ENCODE measurements at regions of chr15 and their contacts with region 1.

Region 1: GRCh38 chr15:62389885-62390790 is 225.1 kb upstream of the C2CD4B start:
- DNase-seq: peak; percentile 67
- H3K4me3 Mint-ChIP-seq: peak within 1 kb of the TSS; percentile 90
- H3K27ac Mint-ChIP-seq: peak within 1 kb of the TSS; percentile 88
- H3K4me1 Mint-ChIP-seq: peaks cover 9% of the 10 kb centered on the region
- H3K27me3 Mint-ChIP-seq: peaks cover 3% of the 10 kb centered on the region
- CTCF ChIP-seq: no peak

Region 2: GRCh38 chr15:62068071-62068786 is 321.9 kb before region 1 on chr15:
- CTCF ChIA-PET with region 1: no interaction called
- POLR2A ChIA-PET with region 1: no interaction called
- intact Hi-C with region 1: no loop called
- DNase-seq: peak; percentile 22
- H3K4me3 Mint-ChIP-seq: no peak overlapping the region
- H3K27ac Mint-ChIP-seq: no peak overlapping the region
- H3K4me1 Mint-ChIP-seq: peaks cover 16% of the 10 kb centered on the region
- H3K27me3 Mint-ChIP-seq: peaks cover 10% of the 10 kb centered on the region
- CTCF ChIP-seq: no peak

Region 3: DNA sequence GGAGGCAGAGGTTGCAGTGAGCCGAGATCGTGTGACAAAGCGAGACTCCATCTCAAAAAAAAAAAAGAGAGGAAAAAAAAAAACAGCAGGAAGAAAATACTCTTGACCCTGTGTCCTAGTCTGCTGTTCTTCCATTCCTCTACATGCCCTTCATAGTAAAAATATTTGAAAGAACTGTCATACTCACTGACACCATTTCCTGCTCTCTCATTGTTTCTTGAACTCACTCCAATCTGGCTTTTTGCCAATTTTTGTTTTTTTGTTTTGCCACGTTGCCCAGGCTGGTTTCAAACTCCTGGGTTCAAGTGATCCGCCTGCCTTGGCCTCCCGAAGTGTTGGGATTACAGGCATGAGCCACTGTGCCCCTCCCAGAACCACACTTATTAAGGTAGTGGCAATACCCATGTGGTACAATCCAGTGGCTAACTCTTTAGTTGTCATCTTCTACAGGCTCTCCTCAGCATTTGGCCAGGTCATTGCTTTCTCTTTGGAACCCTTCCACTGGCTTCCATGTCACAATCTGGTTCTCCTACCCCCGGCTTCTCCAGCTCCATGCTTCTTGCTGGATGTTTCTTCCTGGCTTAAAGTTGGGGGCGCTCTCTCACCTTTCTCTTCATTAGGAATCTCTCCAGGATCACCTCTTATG is 13.1 kb after region 1 on chr15:
- CTCF ChIA-PET with region 1: interaction called, 14 read pairs
- POLR2A ChIA-PET with region 1: interaction called, 8 read pairs
- intact Hi-C with region 1: no loop called
- DNase-seq: peak; percentile 66
- H3K4me3 Mint-ChIP-seq: peak overlapping the region; percentile 34
- H3K27ac Mint-ChIP-seq: peak overlapping the region; percentile 69
- H3K4me1 Mint-ChIP-seq: peaks cover 25% of the 10 kb centered on the region
- H3K27me3 Mint-ChIP-seq: no peaks in the 10 kb centered on the region
- CTCF ChIP-seq: no peak

Region 4: GRCh38 chr15:62469874-62470688 is 79.9 kb after region 1 on chr15:
- CTCF ChIA-PET with region 1: no interaction called
- POLR2A ChIA-PET with region 1: no interaction called
- intact Hi-C with region 1: loop called (anchors 5 kb)
- DNase-seq: no peak
- H3K4me3 Mint-ChIP-seq: no peak overlapping the region
- H3K27ac Mint-ChIP-seq: no peak overlapping the region
- H3K4me1 Mint-ChIP-seq: peaks cover 11% of the 10 kb centered on the region
- H3K27me3 Mint-ChIP-seq: no peaks in the 10 kb centered on the region
- CTCF ChIP-seq: no peak

Region 5: GRCh38 chr15:62606376-62607113 is 216.4 kb after region 1 on chr15:
- CTCF ChIA-PET with region 1: no interaction called
- POLR2A ChIA-PET with region 1: interaction called, 30 read pairs
- intact Hi-C with region 1: loop called (anchors 10 kb)
- DNase-seq: peak; percentile 83
- H3K4me3 Mint-ChIP-seq: no peak overlapping the region
- H3K27ac Mint-ChIP-seq: no peak overlapping the region
- H3K4me1 Mint-ChIP-seq: peaks cover 48% of the 10 kb centered on the region
- H3K27me3 Mint-ChIP-seq: no peaks in the 10 kb centered on the region
- CTCF ChIP-seq: no peak

Region 6: DNA sequence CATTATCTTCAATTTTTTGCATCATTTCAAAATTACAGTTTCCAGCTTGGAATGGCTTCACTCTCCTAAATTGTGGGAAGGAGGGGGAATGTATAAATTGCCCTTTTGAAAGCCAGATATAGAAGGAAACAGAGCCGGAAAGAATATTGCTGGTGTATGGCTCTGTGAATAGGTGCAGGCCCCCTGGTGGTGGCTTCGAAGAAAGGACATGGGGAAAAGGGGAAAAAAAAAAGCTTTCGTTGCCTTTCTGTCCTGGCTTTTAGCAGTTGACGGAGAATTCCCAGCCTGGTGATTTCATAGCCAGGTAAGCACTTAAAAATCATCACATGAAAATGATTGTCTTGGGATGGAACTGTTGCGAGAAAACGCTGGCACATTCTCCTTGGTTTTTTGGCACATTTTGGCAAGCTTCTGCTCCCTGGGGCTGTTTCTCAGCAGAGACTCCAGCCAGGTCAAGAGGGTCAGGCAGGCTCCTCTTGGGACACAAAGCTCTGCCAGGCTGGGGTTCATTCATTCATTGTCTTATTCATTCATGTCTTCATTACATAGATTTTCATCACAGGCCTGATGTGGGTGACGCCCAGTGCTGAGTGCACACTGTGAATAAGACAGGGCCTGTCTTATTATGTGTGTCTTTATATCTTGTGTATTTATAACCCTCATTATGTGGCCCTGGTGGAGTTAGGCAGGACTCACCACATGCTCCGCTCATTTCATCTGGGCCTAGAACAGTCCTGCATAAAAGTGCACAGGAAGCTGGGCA is 352.5 kb after region 1 on chr15:
- CTCF ChIA-PET with region 1: interaction called, 22 read pairs
- POLR2A ChIA-PET with region 1: interaction called, 19 read pairs
- intact Hi-C with region 1: loop called (anchors 1 kb)
- DNase-seq: peak; percentile 82
- H3K4me3 Mint-ChIP-seq: no peak overlapping the region
- H3K27ac Mint-ChIP-seq: peak overlapping the region; percentile 65
- H3K4me1 Mint-ChIP-seq: peaks cover 42% of the 10 kb centered on the region
- H3K27me3 Mint-ChIP-seq: no peaks in the 10 kb centered on the region
- CTCF ChIP-seq: peak; percentile 64

Region 7: DNA sequence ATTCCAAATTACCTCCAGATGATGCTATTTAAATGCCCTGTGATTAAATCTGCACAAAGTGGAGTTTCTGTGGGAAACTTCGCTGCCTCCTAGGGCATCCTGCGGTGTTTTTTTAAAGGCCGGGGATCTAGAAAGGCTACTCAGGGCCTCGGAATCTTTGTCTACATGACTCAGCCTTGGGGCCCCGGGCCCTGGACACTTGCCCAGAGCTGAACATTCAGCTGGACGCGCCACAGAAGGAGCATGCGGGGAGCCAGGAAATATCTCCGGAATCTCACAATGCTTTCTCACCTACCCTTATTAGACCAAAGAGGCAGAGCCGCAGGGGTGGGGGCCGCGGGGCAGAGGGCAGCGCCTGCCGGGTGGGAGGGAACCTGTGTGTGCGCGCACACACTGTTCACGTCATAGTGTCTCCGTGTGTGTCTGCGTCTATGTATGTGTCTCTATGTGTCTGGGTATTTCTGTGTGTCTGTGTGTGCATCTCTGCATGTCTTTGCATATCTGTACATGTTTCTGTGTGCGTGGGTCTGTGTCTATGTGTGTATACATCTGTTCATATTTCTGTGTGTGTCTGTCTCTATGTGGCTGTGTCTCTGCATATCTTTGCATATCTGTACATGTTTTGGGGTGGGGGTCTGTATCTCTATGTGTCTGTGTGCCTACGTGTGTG is 507.0 kb after region 1 on chr15:
- CTCF ChIA-PET with region 1: interaction called, 3 read pairs
- POLR2A ChIA-PET with region 1: no interaction called
- intact Hi-C with region 1: loop called (anchors 2 kb)
- DNase-seq: peak; percentile 98
- H3K4me3 Mint-ChIP-seq: peak overlapping the region; percentile 69
- H3K27ac Mint-ChIP-seq: peak overlapping the region; percentile 90
- H3K4me1 Mint-ChIP-seq: peaks cover 63% of the 10 kb centered on the region
- H3K27me3 Mint-ChIP-seq: no peaks in the 10 kb centered on the region
- CTCF ChIP-seq: no peak

Measured in MCF 10A (cell line).